AG04449 (cell line): ENCODE measurements at regions of chr14 and their contacts with region 1.

Region 1: DNA sequence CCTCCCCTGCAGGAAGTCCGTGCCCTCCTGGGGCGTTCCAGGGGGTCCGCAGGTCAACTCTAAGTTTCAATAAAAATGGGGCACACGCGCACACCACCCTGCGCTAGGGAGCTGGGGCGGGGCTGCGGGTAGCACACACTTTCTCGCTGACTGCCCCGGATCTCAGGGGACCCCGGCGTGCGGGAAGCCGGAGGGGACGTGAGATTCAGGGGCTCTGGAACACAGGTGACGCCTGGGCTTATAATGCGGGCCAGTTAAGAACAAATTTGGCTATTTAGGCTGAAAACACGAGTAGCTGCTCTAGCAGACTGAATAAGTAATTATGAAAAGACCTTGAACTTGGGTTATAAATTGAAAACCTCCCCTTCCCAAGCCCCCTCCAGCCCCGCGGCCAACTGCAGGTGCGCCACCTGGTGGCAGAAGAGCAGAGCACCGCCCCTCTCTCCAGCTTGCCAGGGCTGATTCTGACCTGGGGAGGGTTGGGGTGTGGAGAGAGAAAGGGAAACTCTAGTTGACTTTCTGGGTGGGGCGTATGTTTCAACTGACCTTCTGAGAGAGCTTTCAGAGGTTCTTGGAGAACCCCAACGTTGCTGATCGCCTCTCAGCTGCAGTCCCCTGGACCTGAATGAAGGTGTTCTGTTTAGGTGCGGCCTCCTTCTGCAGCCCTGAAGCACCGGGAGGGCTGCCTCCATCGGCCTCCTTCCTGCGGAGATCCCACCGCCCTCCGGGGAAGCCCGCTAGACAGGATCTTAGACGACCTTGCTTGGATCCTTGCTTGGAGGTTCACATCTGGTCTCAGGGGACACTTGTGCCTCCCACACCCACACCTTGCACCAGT is 118.4 kb upstream of the EVL start:
- DNase-seq: no peak
- H3K4me3 ChIP-seq: no peak overlapping the region; the same call in 1 of the 2 replicates
- CTCF ChIP-seq: peak; percentile 89

Region 2: GRCh38 chr14:99706107-99706900 is 240.6 kb before region 1 on chr14:
- CTCF ChIA-PET with region 1: no interaction called
- POLR2A ChIA-PET with region 1: no interaction called
- DNase-seq: no peak
- H3K4me3 ChIP-seq: no peak overlapping the region
- CTCF ChIP-seq: no peak

Region 3: GRCh38 chr14:99891900-99892299 is 55.0 kb before region 1 on chr14:
- CTCF ChIA-PET with region 1: interaction called, 11 read pairs
- POLR2A ChIA-PET with region 1: no interaction called
- DNase-seq: no peak
- H3K4me3 ChIP-seq: no peak overlapping the region
- CTCF ChIP-seq: no peak

Region 4: DNA sequence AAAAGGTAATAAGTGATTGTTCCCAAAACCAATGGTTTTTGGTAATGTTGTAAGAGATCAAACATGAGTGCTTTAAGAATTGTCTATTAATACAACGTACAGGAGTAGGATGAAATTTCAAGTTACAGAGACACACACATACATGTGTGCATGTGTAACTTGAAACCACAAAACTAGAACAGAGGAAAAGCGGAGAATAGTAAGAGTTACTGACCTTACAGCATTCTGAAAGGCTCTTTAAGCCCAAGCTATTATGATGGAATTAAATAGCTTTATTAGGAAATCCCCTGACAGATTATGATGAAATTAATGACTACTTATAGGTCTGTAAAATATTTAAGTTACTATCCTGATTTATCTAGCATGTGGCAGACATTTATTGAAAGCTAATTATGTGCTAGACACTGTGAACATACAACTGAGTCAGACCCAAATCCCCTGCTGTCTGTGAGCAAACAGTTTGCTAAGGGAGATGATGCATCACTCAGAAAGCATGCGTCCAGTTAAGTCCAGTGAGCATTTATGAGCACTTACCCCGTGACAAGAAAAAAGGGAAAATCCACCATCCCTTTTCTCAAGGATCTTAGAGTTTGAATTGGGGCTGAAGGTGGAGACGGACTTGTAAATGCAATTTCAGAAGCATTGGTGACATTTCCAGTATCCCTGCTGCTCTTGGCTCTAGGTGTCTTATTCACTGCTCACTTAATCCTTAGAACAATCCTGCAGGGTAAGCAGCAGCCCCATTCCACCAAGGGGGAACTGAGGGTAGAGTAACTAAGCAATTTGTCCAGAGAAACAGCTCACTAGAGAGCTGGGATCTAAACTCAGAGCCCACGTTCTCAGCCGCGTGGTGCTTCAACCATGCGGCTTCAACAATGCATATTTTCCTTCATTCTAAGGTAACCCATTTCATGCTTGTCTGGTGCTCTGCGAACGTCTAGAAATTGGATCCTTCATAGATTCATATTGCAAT is 36.2 kb before region 1 on chr14:
- CTCF ChIA-PET with region 1: interaction called, 25 read pairs
- POLR2A ChIA-PET with region 1: no interaction called
- DNase-seq: peak; percentile 87
- H3K4me3 ChIP-seq: no peak overlapping the region
- CTCF ChIP-seq: no peak

Region 5: GRCh38 chr14:99925471-99925870 is 21.4 kb before region 1 on chr14:
- CTCF ChIA-PET with region 1: interaction called, 22 read pairs
- POLR2A ChIA-PET with region 1: no interaction called
- DNase-seq: no peak
- H3K4me3 ChIP-seq: no peak overlapping the region
- CTCF ChIP-seq: no peak

Region 6: GRCh38 chr14:99958380-99958779 is 11.5 kb after region 1 on chr14:
- CTCF ChIA-PET with region 1: interaction called, 17 read pairs
- POLR2A ChIA-PET with region 1: no interaction called
- DNase-seq: no peak
- H3K4me3 ChIP-seq: no peak overlapping the region
- CTCF ChIP-seq: no peak

Region 7: GRCh38 chr14:100031536-100032281 is 84.8 kb after region 1 on chr14:
- CTCF ChIA-PET with region 1: no interaction called
- POLR2A ChIA-PET with region 1: no interaction called
- DNase-seq: peak; percentile 96
- H3K4me3 ChIP-seq: peak overlapping the region; percentile 57
- CTCF ChIP-seq: no peak